A673 (cell line): ENCODE measurements at regions of chr18 and their contacts with region 1.

Region 1: DNA sequence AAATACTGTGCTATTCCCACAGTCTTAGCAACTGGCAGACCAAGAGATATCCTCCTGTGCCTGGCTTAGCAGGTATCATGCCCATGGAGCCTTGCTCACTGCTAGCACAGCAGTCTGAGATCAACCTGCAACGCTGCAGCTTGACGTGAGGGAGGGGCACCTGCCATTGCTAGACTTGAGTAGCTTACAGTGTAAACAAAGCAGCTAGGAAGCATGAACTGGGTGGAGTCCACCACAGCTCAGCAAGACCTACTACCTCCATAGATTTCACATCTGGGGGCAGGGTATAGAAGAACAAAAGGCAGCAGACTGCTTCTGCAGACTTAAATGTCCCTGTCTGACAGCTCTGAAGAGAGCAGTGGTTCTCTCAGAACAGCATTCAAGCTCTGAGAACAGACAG is 74.8 kb downstream of the AKAIN1 start:
- DNase-seq: no peak
- H3K4me3 ChIP-seq: no peak overlapping the region
- H3K27ac ChIP-seq: no peak overlapping the region
- H3K4me1 ChIP-seq: no peaks in the 10 kb centered on the region
- H3K27me3 ChIP-seq: peaks cover 25% of the 10 kb centered on the region
- CTCF ChIP-seq: no peak

Region 2: DNA sequence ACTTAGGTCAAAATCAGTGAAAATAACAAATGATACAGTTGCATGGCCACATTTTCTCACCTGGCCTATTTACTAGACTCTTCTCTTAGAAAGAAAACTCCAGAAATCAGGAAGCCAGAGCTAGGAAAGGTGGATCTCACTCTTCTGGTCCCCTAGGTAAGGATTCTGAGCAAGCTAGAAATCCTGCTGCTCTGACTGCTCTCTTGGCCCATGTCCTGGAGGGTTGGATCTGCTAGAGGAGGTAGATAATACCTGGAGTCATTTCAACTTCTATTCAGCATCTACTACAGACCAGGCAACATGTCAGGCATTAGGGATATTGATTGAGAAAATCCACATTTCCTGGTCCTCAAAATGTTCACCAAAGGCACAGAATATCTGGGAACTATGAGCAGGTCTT is 39.8 kb after region 1 on chr18:
- CTCF ChIA-PET with region 1: no interaction called
- POLR2A ChIA-PET with region 1: no interaction called
- intact Hi-C with region 1: loop called (anchors 5 kb)
- DNase-seq: no peak
- H3K4me3 ChIP-seq: no peak overlapping the region
- H3K27ac ChIP-seq: no peak overlapping the region
- H3K4me1 ChIP-seq: no peaks in the 10 kb centered on the region
- H3K27me3 ChIP-seq: peaks cover 51% of the 10 kb centered on the region
- CTCF ChIP-seq: no peak

Region 3: GRCh38 chr18:5600378-5601071 is 478.3 kb after region 1 on chr18:
- CTCF ChIA-PET with region 1: no interaction called
- POLR2A ChIA-PET with region 1: no interaction called
- intact Hi-C with region 1: no loop called
- DNase-seq: peak; percentile 35
- H3K4me3 ChIP-seq: no peak overlapping the region
- H3K27ac ChIP-seq: no peak overlapping the region
- H3K4me1 ChIP-seq: no peaks in the 10 kb centered on the region
- H3K27me3 ChIP-seq: peaks cover 6% of the 10 kb centered on the region
- CTCF ChIP-seq: peak; percentile 49; the same call in 1 of the 2 replicates